Activated CD4-positive, alpha-beta T cell treated with anti-CD3 and anti-CD28 coated beads, Interleukin-2, amount 10 ng/mL, durations not matched to agents 7 days and 5 days (primary cell): ENCODE measurements at regions of chr9 and their contacts with region 1.

Region 1: GRCh38 chr9:34332076-34332964 is 3.0 kb downstream of the NUDT2 start:
- DNase-seq: peak; percentile 27
- H3K4me3 Mint-ChIP-seq: peak overlapping the region; percentile 12
- H3K27ac Mint-ChIP-seq: peak overlapping the region; percentile 16
- H3K4me1 Mint-ChIP-seq: peaks cover 32% of the 10 kb centered on the region
- H3K27me3 Mint-ChIP-seq: no peaks in the 10 kb centered on the region

Region 2: DNA sequence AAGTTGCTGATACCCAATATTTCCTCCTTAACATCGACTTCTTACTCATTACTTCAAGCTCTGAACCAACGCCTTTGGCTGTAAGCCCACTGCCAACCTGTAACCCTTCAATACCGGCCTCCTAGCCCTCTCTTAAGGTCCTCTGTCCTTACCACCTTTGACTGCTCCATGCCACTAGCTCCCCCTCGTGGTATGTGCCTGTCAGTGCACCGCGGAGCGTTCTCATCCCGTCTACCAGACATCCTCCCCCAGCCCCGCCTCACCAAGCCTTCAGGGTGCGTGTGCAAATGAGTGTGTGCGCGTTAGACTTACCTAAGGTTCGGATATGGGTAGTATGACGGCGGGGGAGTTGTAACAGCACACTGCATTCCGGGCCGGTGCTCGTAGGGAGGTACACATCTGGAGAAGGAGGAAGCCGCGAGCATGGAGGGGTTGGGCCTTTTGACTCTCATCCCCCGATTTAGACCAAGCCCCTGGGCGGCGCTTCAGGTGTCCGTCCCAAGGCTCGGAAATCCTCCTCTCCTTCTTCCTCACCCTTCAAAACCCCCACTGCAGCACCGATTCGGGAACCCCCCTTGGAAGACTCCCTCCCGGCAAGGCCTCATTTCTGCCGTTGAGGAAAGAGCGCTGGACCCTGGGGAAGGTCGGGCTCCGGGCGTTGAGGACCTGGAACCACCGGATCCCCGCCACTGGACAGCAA is 47.2 kb after region 1 on chr9:
- CTCF ChIA-PET with region 1: interaction called, 43 read pairs
- POLR2A ChIA-PET with region 1: no interaction called
- DNase-seq: peak; percentile 95
- H3K4me3 Mint-ChIP-seq: peak overlapping the region; percentile 80
- H3K27ac Mint-ChIP-seq: peak overlapping the region; percentile 87
- H3K4me1 Mint-ChIP-seq: peaks cover 46% of the 10 kb centered on the region
- H3K27me3 Mint-ChIP-seq: peaks cover 11% of the 10 kb centered on the region